Caco-2 (cell line): ENCODE measurements at regions of chr2 and their contacts with region 1.

Region 1: GRCh38 chr2:172710584-172711024 is 25.0 kb upstream of the RAPGEF4 start:
- DNase-seq: peak in 1 of 2 experiments; percentile 59
- H3K4me3 ChIP-seq: no peak overlapping the region
- H3K4me3 Mint-ChIP-seq: no peak overlapping the region
- H3K27ac Mint-ChIP-seq: no peak overlapping the region
- H3K4me1 ChIP-seq: no peaks in the 10 kb centered on the region
- H3K4me1 Mint-ChIP-seq: no peaks in the 10 kb centered on the region
- H3K27me3 ChIP-seq: no peaks in the 10 kb centered on the region
- H3K27me3 Mint-ChIP-seq: peaks cover 18% of the 10 kb centered on the region
- CTCF ChIP-seq: peak; percentile 64 to 73

Region 2: GRCh38 chr2:172588931-172589330 is 121.7 kb before region 1 on chr2:
- CTCF ChIA-PET with region 1: no interaction called
- POLR2A ChIA-PET with region 1: no interaction called
- intact Hi-C with region 1: loop called (anchors 1 kb)
- DNase-seq: no peak
- H3K4me3 ChIP-seq: no peak overlapping the region
- H3K4me3 Mint-ChIP-seq: no peak overlapping the region
- H3K27ac Mint-ChIP-seq: no peak overlapping the region
- H3K4me1 ChIP-seq: no peaks in the 10 kb centered on the region
- H3K4me1 Mint-ChIP-seq: no peaks in the 10 kb centered on the region
- H3K27me3 ChIP-seq: no peaks in the 10 kb centered on the region
- H3K27me3 Mint-ChIP-seq: no peaks in the 10 kb centered on the region
- CTCF ChIP-seq: no peak

Region 3: DNA sequence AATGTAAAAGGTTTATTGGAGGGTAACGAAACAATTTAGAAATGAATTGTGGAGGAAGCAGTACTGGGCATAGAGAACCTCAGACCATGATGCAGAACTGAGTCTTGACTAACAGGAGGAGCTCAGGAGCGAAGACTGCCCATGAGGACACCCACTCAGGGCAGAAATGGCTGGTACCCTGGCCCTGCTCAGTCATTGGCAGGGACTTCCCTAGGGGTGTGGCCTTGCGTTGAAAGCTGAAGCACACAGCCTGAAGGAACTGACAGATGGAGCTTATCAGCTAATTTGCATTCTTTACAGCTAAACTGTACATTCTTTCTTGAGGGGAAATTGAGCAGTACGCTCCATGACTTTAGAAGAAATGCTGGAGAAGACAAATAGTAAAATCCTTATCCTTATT is 97.6 kb before region 1 on chr2:
- CTCF ChIA-PET with region 1: interaction called, 10 read pairs
- POLR2A ChIA-PET with region 1: no interaction called
- intact Hi-C with region 1: no loop called
- DNase-seq: peak; percentile 14 to 59
- H3K4me3 ChIP-seq: no peak overlapping the region
- H3K4me3 Mint-ChIP-seq: no peak overlapping the region
- H3K27ac Mint-ChIP-seq: no peak overlapping the region
- H3K4me1 ChIP-seq: no peaks in the 10 kb centered on the region
- H3K4me1 Mint-ChIP-seq: peaks cover 4% of the 10 kb centered on the region
- H3K27me3 ChIP-seq: no peaks in the 10 kb centered on the region
- H3K27me3 Mint-ChIP-seq: no peaks in the 10 kb centered on the region
- CTCF ChIP-seq: no peak

Region 4: GRCh38 chr2:172753610-172754009 is 43.0 kb after region 1 on chr2:
- CTCF ChIA-PET with region 1: no interaction called
- POLR2A ChIA-PET with region 1: no interaction called
- intact Hi-C with region 1: no loop called
- DNase-seq: no peak
- H3K4me3 ChIP-seq: no peak overlapping the region
- H3K4me3 Mint-ChIP-seq: no peak overlapping the region
- H3K27ac Mint-ChIP-seq: no peak overlapping the region
- H3K4me1 ChIP-seq: no peaks in the 10 kb centered on the region
- H3K4me1 Mint-ChIP-seq: no peaks in the 10 kb centered on the region
- H3K27me3 ChIP-seq: no peaks in the 10 kb centered on the region
- H3K27me3 Mint-ChIP-seq: peaks cover 8% of the 10 kb centered on the region
- CTCF ChIP-seq: no peak